ENCODE measurements at regions of chrX and their contacts with region 1.

Region 1: GRCh38 chrX:7950865-7951264 is 23.7 kb upstream of the PNPLA4 start:
- DNase-seq: no peak
- H3K4me3 ChIP-seq: no peak overlapping the region
- H3K27ac ChIP-seq: no peak overlapping the region
- H3K4me1 ChIP-seq: no peaks in the 10 kb centered on the region
- H3K27me3 ChIP-seq: no peaks in the 10 kb centered on the region
- CTCF ChIP-seq: no peak
- EP300 ChIP-seq: no peak
- POLR2A ChIP-seq: no peak

Region 2: DNA sequence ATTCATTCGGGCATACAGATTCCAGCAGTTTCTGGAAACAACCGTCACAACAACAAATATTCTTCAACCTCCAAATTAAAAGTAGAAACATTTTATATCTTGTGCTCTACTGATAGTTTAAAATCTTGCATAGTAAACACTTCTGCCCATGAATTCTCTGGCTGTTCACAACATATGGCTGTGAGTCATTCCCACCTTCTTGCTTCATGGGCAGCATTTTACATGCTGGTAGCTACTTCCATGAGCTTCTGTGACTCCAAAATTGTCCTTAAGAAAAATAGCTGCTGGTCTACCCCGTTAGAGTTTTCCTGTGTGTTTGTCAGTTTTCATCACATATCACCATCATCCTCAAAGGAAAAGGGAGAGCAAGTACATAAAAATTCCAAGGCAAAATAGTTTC is 46.3 kb before region 1 on chrX:
- intact Hi-C with region 1: loop called (anchors 10 kb)
- DNase-seq: no peak
- H3K4me3 ChIP-seq: no peak overlapping the region
- H3K27ac ChIP-seq: no peak overlapping the region
- H3K4me1 ChIP-seq: no peaks in the 10 kb centered on the region
- H3K27me3 ChIP-seq: no peaks in the 10 kb centered on the region
- CTCF ChIP-seq: no peak
- EP300 ChIP-seq: no peak
- POLR2A ChIP-seq: no peak

Region 3: DNA sequence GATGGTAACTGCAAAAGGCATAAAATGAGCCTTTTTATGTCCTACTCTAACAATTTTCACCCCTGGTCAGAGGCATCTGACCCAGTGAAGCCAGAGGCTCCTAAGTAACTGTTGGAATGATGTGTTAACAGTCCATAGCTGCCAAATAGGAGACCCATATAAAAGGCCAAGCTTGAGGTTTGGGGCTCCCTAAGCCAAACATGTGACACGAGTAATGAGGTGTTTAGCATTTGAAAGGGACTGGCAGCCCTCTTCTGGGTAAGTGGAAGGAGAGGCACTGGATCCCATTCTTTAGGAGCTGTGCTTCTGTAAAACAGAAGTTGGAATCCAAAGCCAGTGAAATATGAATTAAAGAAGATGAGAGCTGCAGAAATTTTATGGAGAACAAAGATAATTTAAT is 77.0 kb after region 1 on chrX:
- intact Hi-C with region 1: no loop called
- DNase-seq: no peak
- H3K4me3 ChIP-seq: no peak overlapping the region
- H3K27ac ChIP-seq: peak overlapping the region in 2 of 4 donors; percentile 42 to 51
- H3K4me1 ChIP-seq: peaks cover 0 to 8% (median 4%) of the 10 kb centered on the region in 4 donors
- H3K27me3 ChIP-seq: no peaks in the 10 kb centered on the region
- CTCF ChIP-seq: no peak
- EP300 ChIP-seq: no peak
- POLR2A ChIP-seq: no peak

Region 4: GRCh38 chrX:8139716-8140115 is 188.9 kb after region 1 on chrX:
- intact Hi-C with region 1: no loop called
- DNase-seq: no peak
- H3K4me3 ChIP-seq: no peak overlapping the region
- H3K27ac ChIP-seq: no peak overlapping the region
- H3K4me1 ChIP-seq: no peaks in the 10 kb centered on the region
- H3K27me3 ChIP-seq: no peaks in the 10 kb centered on the region
- CTCF ChIP-seq: no peak
- EP300 ChIP-seq: no peak
- POLR2A ChIP-seq: no peak

Measured in esophagus muscularis mucosa (tissue), 4 donors.